Mammary epithelial cell (primary cell): ENCODE measurements at regions of chrX and their contacts with region 1.

Region 1: GRCh38 chrX:16589214-16589613 is 60.7 kb upstream of the S100G start:
- DNase-seq: peak; percentile 71
- H3K4me3 ChIP-seq: peak overlapping the region in 1 of 3 experiments; percentile 32
- H3K27ac ChIP-seq: peak overlapping the region; percentile 27
- H3K4me1 ChIP-seq: peaks cover 32% of the 10 kb centered on the region
- H3K27me3 ChIP-seq: no peaks in the 10 kb centered on the region
- CTCF ChIP-seq: no peak

Region 2: GRCh38 chrX:15947648-15948317 is 641.4 kb before region 1 on chrX:
- CTCF ChIA-PET with region 1: no interaction called
- dilution Hi-C with region 1: no loop called
- in situ Hi-C with region 1: no loop called
- intact Hi-C with region 1: loop called (anchors 10 kb)
- DNase-seq: peak; percentile 65
- H3K4me3 ChIP-seq: peak overlapping the region in 2 of 3 experiments; percentile 19 to 35
- H3K27ac ChIP-seq: peak overlapping the region; percentile 45
- H3K4me1 ChIP-seq: peaks cover 29% of the 10 kb centered on the region
- H3K27me3 ChIP-seq: no peaks in the 10 kb centered on the region
- CTCF ChIP-seq: no peak

Region 3: GRCh38 chrX:16664074-16664473 is 74.9 kb after region 1 on chrX:
- CTCF ChIA-PET with region 1: no interaction called
- dilution Hi-C with region 1: no loop called
- in situ Hi-C with region 1: no loop called
- intact Hi-C with region 1: loop called (anchors 2 kb)
- DNase-seq: no peak
- H3K4me3 ChIP-seq: no peak overlapping the region
- H3K27ac ChIP-seq: no peak overlapping the region
- H3K4me1 ChIP-seq: no peaks in the 10 kb centered on the region
- H3K27me3 ChIP-seq: no peaks in the 10 kb centered on the region
- CTCF ChIP-seq: peak in 1 of 2 donors; percentile 34